ENCODE measurements at regions of chr2 and their contacts with region 1.

Region 1: DNA sequence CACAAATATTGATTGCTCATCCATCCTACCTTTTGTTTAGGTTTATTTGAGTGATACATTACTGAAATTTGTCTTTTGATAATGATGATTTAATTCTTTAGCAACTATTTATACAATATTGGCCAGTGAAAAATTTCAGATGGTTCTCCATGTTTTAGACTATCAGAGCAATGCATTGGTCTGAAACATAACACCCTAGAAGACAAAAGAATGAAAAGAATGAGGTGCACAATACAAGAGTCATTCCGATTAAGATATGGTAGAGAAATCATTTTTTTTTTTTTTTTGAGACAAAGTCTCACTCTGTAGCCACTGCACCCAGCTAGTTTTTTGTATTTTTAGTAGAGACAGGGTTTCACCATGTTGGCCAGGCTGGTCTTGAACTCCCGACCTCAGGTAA is 197.4 kb upstream of the FAM98A start:
- DNase-seq: no peak
- H3K4me3 ChIP-seq: no peak overlapping the region
- H3K4me3 Mint-ChIP-seq: no peak overlapping the region
- H3K27ac ChIP-seq: no peak overlapping the region
- H3K27ac Mint-ChIP-seq: no peak overlapping the region
- H3K4me1 ChIP-seq: no peaks in the 10 kb centered on the region
- H3K4me1 Mint-ChIP-seq: no peaks in the 10 kb centered on the region
- H3K27me3 ChIP-seq: no peaks in the 10 kb centered on the region
- H3K27me3 Mint-ChIP-seq: no peaks in the 10 kb centered on the region

Region 2: DNA sequence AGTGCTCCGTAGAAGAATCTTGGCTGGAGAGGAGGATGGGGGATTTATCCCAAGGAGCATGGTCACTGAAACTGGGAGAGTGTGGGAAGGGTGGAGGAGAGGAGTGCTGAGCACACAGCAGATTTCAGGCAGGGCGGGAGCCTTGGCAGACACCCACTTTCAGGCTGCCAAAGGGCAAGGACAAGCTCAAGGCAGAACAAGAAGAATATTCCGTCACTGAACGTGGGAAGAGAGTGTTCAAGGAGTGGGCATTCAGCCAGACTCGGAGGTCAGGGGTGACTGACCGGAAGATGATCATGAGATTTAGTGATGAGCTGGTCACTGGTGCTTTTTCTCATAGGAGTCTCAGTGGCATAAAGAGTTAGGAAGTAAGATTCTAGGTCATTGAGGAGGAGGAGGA is 456.2 kb before region 1 on chr2:
- CTCF ChIA-PET with region 1: no interaction called
- POLR2A ChIA-PET with region 1: no interaction called
- intact Hi-C with region 1: no loop called
- DNase-seq: no peak
- H3K4me3 ChIP-seq: no peak overlapping the region
- H3K4me3 Mint-ChIP-seq: no peak overlapping the region
- H3K27ac ChIP-seq: no peak overlapping the region
- H3K27ac Mint-ChIP-seq: no peak overlapping the region
- H3K4me1 ChIP-seq: no peaks in the 10 kb centered on the region
- H3K4me1 Mint-ChIP-seq: peaks cover 6 to 12% (median 7%) of the 10 kb centered on the region in 4 donors
- H3K27me3 ChIP-seq: no peaks in the 10 kb centered on the region
- H3K27me3 Mint-ChIP-seq: peaks cover 3 to 7% of the 10 kb centered on the region in 2 donors

Region 3: GRCh38 chr2:33583194-33583938 is 213.1 kb before region 1 on chr2:
- CTCF ChIA-PET with region 1: no interaction called
- POLR2A ChIA-PET with region 1: no interaction called
- intact Hi-C with region 1: no loop called
- DNase-seq: peak; percentile 25 to 39 (median 36)
- H3K4me3 ChIP-seq: no peak overlapping the region
- H3K4me3 Mint-ChIP-seq: no peak overlapping the region
- H3K27ac ChIP-seq: no peak overlapping the region
- H3K27ac Mint-ChIP-seq: peak overlapping the region in 1 of 7 donors; percentile 43
- H3K4me1 ChIP-seq: peaks cover 5% of the 10 kb centered on the region
- H3K4me1 Mint-ChIP-seq: peaks cover 0 to 6% (median 2%) of the 10 kb centered on the region in 4 donors
- H3K27me3 ChIP-seq: no peaks in the 10 kb centered on the region
- H3K27me3 Mint-ChIP-seq: no peaks in the 10 kb centered on the region

Region 4: GRCh38 chr2:33673937-33674336 is 122.6 kb before region 1 on chr2:
- CTCF ChIA-PET with region 1: no interaction called
- POLR2A ChIA-PET with region 1: no interaction called
- intact Hi-C with region 1: loop called (anchors 5 kb)
- DNase-seq: no peak
- H3K4me3 ChIP-seq: no peak overlapping the region
- H3K4me3 Mint-ChIP-seq: no peak overlapping the region
- H3K27ac ChIP-seq: no peak overlapping the region
- H3K27ac Mint-ChIP-seq: no peak overlapping the region
- H3K4me1 ChIP-seq: no peaks in the 10 kb centered on the region
- H3K4me1 Mint-ChIP-seq: no peaks in the 10 kb centered on the region
- H3K27me3 ChIP-seq: no peaks in the 10 kb centered on the region
- H3K27me3 Mint-ChIP-seq: peaks cover 3 to 7% of the 10 kb centered on the region in 2 donors